Activated CD8-positive, alpha-beta T cell treated with anti-CD3 and anti-CD28 coated beads for 36 hours (primary cell): ENCODE measurements at regions of chr11 and their contacts with region 1.

Region 1: GRCh38 chr11:102989379-102990047 is 34.0 kb upstream of the MMP13 start:
- DNase-seq: no peak
- ATAC-seq: no peak
- H3K4me3 Mint-ChIP-seq: no peak overlapping the region
- H3K27ac Mint-ChIP-seq: no peak overlapping the region
- H3K4me1 Mint-ChIP-seq: no peaks in the 10 kb centered on the region
- H3K27me3 Mint-ChIP-seq: peaks cover 15% of the 10 kb centered on the region
- CTCF ChIP-seq: no peak

Region 2: DNA sequence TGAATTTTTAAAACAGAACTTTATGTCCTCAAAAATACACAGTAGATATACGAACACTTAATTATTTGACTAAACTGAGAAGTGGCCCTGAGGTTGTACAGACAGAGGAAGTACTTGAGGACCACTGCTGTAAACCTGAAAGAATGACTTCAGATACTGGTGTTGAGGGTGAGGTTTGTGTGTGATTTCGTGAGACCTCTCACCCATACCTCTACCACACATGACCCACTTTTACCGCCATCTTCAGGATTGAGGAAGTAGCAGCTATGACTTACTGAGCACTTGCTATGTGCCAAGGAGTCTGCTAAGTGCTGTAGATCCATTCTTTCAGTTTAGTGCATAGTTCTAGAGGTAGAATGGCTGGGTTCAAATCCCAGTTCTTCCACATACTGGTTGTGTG is 55.9 kb before region 1 on chr11:
- CTCF ChIA-PET with region 1: no interaction called
- POLR2A ChIA-PET with region 1: no interaction called
- intact Hi-C with region 1: loop called (anchors 10 kb)
- DNase-seq: no peak
- ATAC-seq: no peak
- H3K4me3 Mint-ChIP-seq: no peak overlapping the region
- H3K27ac Mint-ChIP-seq: no peak overlapping the region
- H3K4me1 Mint-ChIP-seq: no peaks in the 10 kb centered on the region
- H3K27me3 Mint-ChIP-seq: peaks cover 8% of the 10 kb centered on the region
- CTCF ChIP-seq: no peak

Region 3: GRCh38 chr11:103450241-103450640 is 460.7 kb after region 1 on chr11:
- CTCF ChIA-PET with region 1: no interaction called
- POLR2A ChIA-PET with region 1: no interaction called
- intact Hi-C with region 1: no loop called
- DNase-seq: no peak
- ATAC-seq: no peak
- H3K4me3 Mint-ChIP-seq: no peak overlapping the region
- H3K27ac Mint-ChIP-seq: no peak overlapping the region
- H3K4me1 Mint-ChIP-seq: no peaks in the 10 kb centered on the region
- H3K27me3 Mint-ChIP-seq: no peaks in the 10 kb centered on the region
- CTCF ChIP-seq: no peak